MCF 10A (cell line): ENCODE measurements at regions of chr4 and their contacts with region 1.

Region 1: GRCh38 chr4:184937745-184938144 is 80.5 kb upstream of the HELT start:
- DNase-seq: no peak
- H3K4me3 Mint-ChIP-seq: no peak overlapping the region
- H3K27ac Mint-ChIP-seq: no peak overlapping the region
- H3K4me1 Mint-ChIP-seq: no peaks in the 10 kb centered on the region
- H3K27me3 Mint-ChIP-seq: no peaks in the 10 kb centered on the region
- CTCF ChIP-seq: no peak

Region 2: DNA sequence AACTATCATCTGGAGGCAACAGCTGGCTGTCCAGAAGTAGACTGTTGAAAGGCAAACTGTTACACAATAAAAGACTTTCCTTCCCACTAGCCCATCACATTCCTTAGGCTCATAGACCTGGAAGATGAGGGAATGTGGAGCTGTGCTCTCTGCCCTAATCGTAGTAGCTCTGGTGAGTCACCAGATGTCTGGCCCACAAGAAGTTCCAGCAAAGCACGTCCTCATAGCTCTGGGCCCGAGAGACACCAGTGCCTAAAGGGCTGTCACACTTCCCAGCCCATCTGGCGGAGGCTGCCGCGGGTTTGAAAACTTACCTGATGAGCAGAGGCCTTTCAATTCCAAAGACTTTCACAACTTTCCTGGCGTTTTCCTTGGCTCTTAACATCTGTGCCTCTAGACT is 1114.3 kb before region 1 on chr4:
- CTCF ChIA-PET with region 1: no interaction called
- POLR2A ChIA-PET with region 1: no interaction called
- intact Hi-C with region 1: loop called (anchors 10 kb)
- DNase-seq: peak; percentile 81
- H3K4me3 Mint-ChIP-seq: no peak overlapping the region
- H3K27ac Mint-ChIP-seq: no peak overlapping the region
- H3K4me1 Mint-ChIP-seq: peaks cover 13% of the 10 kb centered on the region
- H3K27me3 Mint-ChIP-seq: no peaks in the 10 kb centered on the region
- CTCF ChIP-seq: no peak

Region 3: DNA sequence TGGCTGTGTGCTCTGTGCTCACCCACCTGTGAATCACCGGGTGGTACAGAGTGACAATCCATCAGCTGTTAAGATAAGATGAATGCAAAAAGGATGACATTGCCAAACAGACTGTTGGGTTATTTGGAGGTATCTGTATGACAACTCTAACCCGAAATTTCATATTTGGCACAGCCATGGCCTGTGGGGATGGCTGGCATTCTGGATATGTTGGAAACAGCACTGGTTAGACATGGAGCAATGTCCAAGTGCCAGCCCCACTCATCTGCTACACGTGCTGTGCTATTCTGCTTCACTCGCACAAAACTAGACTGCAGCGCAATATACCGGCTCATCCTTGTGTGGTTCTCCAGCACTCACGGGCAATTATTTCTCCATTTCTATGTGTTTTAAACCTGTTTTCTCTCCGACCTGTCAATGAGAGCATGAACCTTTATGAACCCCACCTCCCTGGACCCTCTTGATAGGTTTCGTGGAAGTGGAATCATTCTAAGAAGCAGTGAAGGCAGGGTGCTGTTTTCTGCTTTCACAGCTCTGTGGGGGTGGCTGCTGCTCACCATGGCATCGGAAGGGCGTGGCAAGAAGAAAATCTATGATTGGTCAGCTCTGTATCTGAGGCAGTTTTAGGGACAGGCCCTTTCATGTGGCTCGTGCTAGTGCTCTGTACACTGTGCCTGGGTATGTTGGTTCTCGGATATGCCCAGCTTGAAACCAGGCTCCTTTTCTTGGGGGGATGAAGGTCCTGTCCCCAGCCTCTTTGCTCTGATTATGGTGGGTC is 814.9 kb before region 1 on chr4:
- CTCF ChIA-PET with region 1: no interaction called
- POLR2A ChIA-PET with region 1: no interaction called
- intact Hi-C with region 1: no loop called
- DNase-seq: no peak
- H3K4me3 Mint-ChIP-seq: no peak overlapping the region
- H3K27ac Mint-ChIP-seq: no peak overlapping the region
- H3K4me1 Mint-ChIP-seq: no peaks in the 10 kb centered on the region
- H3K27me3 Mint-ChIP-seq: peaks cover 8% of the 10 kb centered on the region
- CTCF ChIP-seq: no peak

Region 4: GRCh38 chr4:184889666-184890335 is 47.9 kb before region 1 on chr4:
- CTCF ChIA-PET with region 1: no interaction called
- POLR2A ChIA-PET with region 1: no interaction called
- intact Hi-C with region 1: no loop called
- DNase-seq: no peak
- H3K4me3 Mint-ChIP-seq: no peak overlapping the region
- H3K27ac Mint-ChIP-seq: no peak overlapping the region
- H3K4me1 Mint-ChIP-seq: peaks cover 6% of the 10 kb centered on the region
- H3K27me3 Mint-ChIP-seq: no peaks in the 10 kb centered on the region
- CTCF ChIP-seq: no peak

Region 5: DNA sequence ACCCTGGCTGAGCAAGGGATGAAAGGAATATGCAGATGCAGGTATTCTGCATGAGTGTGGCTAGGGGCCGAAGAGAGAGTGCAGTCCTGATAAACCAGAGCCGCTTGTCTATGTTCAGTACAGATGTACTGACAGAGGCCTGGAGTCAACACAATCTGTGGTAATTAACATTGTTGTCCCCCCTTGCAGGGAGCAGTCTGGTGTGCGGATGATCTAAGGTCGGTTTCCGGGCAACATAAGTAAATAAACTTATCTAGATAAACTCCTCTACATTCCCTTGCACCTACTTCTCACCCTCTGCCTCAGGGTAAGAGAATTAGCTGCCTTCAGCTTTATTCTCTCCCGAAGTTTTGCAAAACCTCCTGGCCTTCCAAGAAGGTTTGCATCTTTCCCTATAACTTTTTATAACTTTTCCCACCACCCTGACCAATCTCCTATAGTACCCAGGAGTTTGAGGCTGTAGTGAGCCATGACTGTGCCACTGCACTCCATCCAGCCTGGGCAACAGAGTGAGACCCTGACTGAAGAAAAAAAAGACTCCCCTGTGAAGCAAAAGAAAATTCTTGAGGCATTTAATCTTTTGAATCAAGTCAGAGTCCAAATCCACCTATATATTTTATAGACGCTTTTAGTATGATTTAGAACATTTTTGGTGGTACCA is 298.2 kb after region 1 on chr4:
- CTCF ChIA-PET with region 1: no interaction called
- POLR2A ChIA-PET with region 1: no interaction called
- intact Hi-C with region 1: no loop called
- DNase-seq: no peak
- H3K4me3 Mint-ChIP-seq: no peak overlapping the region
- H3K27ac Mint-ChIP-seq: no peak overlapping the region
- H3K4me1 Mint-ChIP-seq: peaks cover 7% of the 10 kb centered on the region
- H3K27me3 Mint-ChIP-seq: no peaks in the 10 kb centered on the region
- CTCF ChIP-seq: no peak